Naive thymus-derived CD4-positive, alpha-beta T cell (primary cell): ENCODE measurements at regions of chr6 and their contacts with region 1.

Region 1: DNA sequence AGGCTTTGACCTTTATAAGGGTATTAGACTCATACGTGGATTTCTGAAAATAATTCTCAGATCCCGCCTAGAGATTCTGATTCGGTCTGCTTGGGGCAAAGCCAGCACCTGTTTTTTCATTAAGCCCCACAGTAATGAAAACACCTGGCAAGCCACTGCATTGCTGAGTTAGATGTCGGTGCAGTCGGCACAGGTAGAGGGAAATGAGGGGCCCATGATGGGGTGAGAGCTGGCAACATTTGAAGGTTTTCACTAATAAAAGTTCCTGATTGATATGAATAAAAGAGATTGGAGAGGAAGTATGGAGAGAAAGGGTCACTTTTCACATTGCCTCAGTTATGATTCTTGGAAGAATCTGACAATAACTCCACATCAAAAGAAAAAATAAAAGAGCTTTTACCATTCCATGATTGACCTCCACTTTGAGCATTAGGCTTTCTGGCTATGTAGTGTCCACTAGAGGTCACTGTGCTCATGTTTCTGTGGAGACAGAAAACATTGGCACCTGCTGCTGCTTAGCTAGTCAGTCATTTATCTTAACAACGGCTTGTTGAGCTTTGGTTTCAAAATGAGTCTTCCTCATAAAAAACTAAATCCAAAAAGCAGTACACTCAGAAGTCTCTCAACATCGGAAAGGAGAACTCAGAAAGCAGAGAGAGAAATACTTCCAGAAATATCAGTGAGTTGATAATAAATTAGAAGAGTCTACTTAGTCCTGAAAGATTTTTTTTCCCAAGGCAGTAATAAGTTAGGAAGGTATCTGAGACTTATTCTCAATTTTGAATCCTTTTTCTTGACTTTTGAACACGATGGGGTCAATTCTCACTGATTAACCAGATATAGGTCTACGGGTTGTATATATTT is 53.3 kb upstream of the KLHL31 start:
- DNase-seq: peak in 5 of 9 donors; percentile 18 to 36 (median 28)
- ATAC-seq: peak; percentile 84
- H3K4me3 ChIP-seq: no peak overlapping the region
- H3K4me3 Mint-ChIP-seq: no peak overlapping the region
- H3K27ac ChIP-seq: no peak overlapping the region
- H3K27ac Mint-ChIP-seq: peak overlapping the region in 1 of 9 donors; percentile 46
- H3K4me1 ChIP-seq: no peaks in the 10 kb centered on the region
- H3K4me1 Mint-ChIP-seq: peaks cover 0 to 7% (median 4%) of the 10 kb centered on the region in 7 donors
- H3K27me3 ChIP-seq: no peaks in the 10 kb centered on the region
- H3K27me3 Mint-ChIP-seq: peaks cover 13 to 34% (median 29%) of the 10 kb centered on the region in 5 donors

Region 2: GRCh38 chr6:53854843-53855567 is 136.2 kb after region 1 on chr6:
- CTCF ChIA-PET with region 1: no interaction called
- POLR2A ChIA-PET with region 1: no interaction called
- intact Hi-C with region 1: no loop called
- DNase-seq: no peak
- ATAC-seq: peak; percentile 40
- H3K4me3 ChIP-seq: no peak overlapping the region
- H3K4me3 Mint-ChIP-seq: peak overlapping the region in 1 of 10 donors; percentile 44
- H3K27ac ChIP-seq: no peak overlapping the region
- H3K27ac Mint-ChIP-seq: peak overlapping the region in 1 of 9 donors; percentile 20
- H3K4me1 ChIP-seq: no peaks in the 10 kb centered on the region
- H3K4me1 Mint-ChIP-seq: peaks cover 4 to 18% (median 10%) of the 10 kb centered on the region in 7 donors
- H3K27me3 ChIP-seq: no peaks in the 10 kb centered on the region
- H3K27me3 Mint-ChIP-seq: no peaks in the 10 kb centered on the region

Region 3: GRCh38 chr6:53956068-53956711 is 237.4 kb after region 1 on chr6:
- CTCF ChIA-PET with region 1: no interaction called
- POLR2A ChIA-PET with region 1: no interaction called
- intact Hi-C with region 1: loop called in 1 of 2 experiments (anchors 1 kb)
- DNase-seq: peak in 1 of 9 donors; percentile 23
- ATAC-seq: no peak
- H3K4me3 ChIP-seq: no peak overlapping the region
- H3K4me3 Mint-ChIP-seq: no peak overlapping the region
- H3K27ac ChIP-seq: no peak overlapping the region
- H3K27ac Mint-ChIP-seq: no peak overlapping the region
- H3K4me1 ChIP-seq: no peaks in the 10 kb centered on the region
- H3K4me1 Mint-ChIP-seq: no peaks in the 10 kb centered on the region
- H3K27me3 ChIP-seq: no peaks in the 10 kb centered on the region
- H3K27me3 Mint-ChIP-seq: peaks cover 0 to 20% (median 0%) of the 10 kb centered on the region in 5 donors